Activated T-helper 1 cell treated with anti-CD3 and anti-CD28 coated beads, Interleukin-12 subunit alpha, Interleukin-12 subunit beta, Interleukin-2, Interleukin-4 antibody, amounts not matched to agents 30 ng/mL and 10 ng/mL and 1 ng/mL, durations not matched to agents 14 hours and 24 hours and 36 hours (primary cell): ENCODE measurements at regions of chr2 and their contacts with region 1.

Region 1: GRCh38 chr2:191105082-191105481 is 45.7 kb downstream of the STAT4 start:
- DNase-seq: no peak
- H3K4me3 Mint-ChIP-seq: no peak overlapping the region
- H3K27ac Mint-ChIP-seq: peak overlapping the region; percentile 13
- H3K4me1 Mint-ChIP-seq: peaks cover 70% of the 10 kb centered on the region
- H3K27me3 Mint-ChIP-seq: no peaks in the 10 kb centered on the region

Region 2: GRCh38 chr2:191086706-191087105 is 18.4 kb before region 1 on chr2:
- intact Hi-C with region 1: loop called (anchors 2 kb)
- DNase-seq: no peak
- H3K4me3 Mint-ChIP-seq: no peak overlapping the region
- H3K27ac Mint-ChIP-seq: no peak overlapping the region
- H3K4me1 Mint-ChIP-seq: peaks cover 31% of the 10 kb centered on the region
- H3K27me3 Mint-ChIP-seq: no peaks in the 10 kb centered on the region